ENCODE measurements at regions of chr20 and their contacts with region 1.

Region 1: DNA sequence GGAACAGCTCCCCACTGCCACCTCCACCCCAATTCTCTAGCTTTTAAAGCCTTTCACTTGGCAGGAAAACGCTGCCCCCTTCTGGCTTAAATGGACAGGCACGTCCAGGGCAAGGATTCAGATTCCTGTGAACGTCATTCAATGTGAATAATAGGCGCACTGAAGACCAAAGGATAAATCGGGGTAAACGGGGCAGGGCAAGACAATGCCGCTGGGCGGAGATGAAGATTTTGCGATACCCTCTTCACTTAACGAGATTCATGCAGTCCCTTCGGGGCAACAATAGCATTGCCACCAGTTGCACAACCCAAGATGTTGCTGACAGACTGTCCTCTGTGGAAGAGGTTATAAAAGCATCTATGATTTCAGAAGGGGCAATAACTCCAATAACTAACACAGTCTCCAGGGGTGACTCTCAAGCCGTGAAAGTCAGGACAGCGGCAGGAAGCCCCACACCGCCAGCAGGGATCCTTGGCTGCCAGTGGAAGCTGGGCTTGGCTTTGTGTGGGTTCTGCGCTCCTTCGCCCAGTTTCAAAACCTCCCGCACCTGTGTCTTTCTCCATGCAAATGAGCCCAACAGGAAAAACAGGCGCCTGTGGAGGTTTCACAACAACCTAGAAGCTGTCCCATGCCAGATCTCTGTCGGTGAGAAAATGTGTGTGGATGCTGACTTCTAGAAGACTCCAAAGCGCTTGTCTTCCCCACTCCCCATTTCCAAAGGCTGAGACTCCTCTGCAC is 291.8 kb downstream of the BMP7 start:
- DNase-seq: no peak
- ATAC-seq: peak; percentile 78
- H3K4me3 ChIP-seq: no peak overlapping the region
- H3K27ac ChIP-seq: no peak overlapping the region
- H3K4me1 ChIP-seq: 0 out of 2 replicates have a peak, but pooled peaks cover 5% of the 10 kb centered on the region
- H3K27me3 ChIP-seq: peaks cover 3% of the 10 kb centered on the region; the same call in 1 of the 2 replicates
- CTCF ChIP-seq: peak; percentile 86

Region 2: GRCh38 chr20:56629670-56630478 is 344.8 kb before region 1 on chr20:
- CTCF ChIA-PET with region 1: interaction called, 7 read pairs
- POLR2A ChIA-PET with region 1: no interaction called
- in situ Hi-C with region 1: no loop called
- intact Hi-C with region 1: loop called (anchors 5 kb)
- DNase-seq: no peak
- ATAC-seq: peak; percentile 77
- H3K4me3 ChIP-seq: peak overlapping the region; percentile 68 to 88
- H3K27ac ChIP-seq: peak overlapping the region; percentile 71
- H3K4me1 ChIP-seq: 0 out of 2 replicates have a peak, but pooled peaks cover 6% of the 10 kb centered on the region
- H3K27me3 ChIP-seq: no peaks in the 10 kb centered on the region
- CTCF ChIP-seq: peak; percentile 88

Region 3: DNA sequence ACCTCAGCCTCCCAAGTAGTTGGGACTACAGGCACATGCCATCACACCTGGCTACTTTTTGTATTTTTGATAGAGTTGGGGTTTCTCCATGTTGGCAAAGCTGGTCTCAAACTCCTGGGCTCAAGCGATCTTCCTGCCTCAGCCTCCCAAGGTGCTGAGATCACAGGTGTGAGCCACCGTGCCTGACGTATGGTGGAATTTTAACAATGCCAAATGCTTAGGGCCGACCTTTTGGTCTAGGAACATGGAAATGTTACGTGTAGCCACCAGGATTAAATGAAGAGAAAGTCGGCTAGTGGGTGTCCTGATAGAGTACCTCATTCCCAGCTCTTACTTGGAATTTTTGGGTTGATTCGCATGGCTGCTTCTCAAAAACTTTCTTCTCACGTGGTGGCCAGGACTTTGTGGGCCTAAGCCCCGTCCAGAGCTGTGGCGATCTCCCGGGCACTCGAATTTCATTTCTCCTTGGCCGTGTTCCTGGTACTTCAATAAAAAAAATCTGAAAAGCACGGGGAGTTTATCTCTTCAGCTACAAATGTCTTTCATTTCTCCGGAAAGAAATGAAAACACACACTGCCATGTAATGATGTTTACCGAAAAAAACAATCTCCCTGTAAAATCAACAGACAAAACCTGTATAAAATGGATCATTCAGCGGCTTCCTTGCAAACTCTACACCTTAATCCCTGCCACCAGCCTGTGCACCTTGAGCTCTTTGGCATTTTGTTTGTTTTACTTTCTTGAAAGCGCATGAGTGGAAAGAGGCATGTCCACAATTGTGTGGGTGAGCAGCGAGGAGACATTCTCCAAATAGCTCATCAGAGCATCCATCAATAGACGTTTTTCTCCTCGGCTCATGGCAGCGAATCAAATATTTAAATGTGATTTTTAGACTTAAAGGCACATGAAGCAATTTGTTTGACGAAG is 172.7 kb before region 1 on chr20:
- CTCF ChIA-PET with region 1: no interaction called
- POLR2A ChIA-PET with region 1: no interaction called
- in situ Hi-C with region 1: no loop called
- intact Hi-C with region 1: no loop called
- DNase-seq: no peak
- ATAC-seq: no peak
- H3K4me3 ChIP-seq: peak overlapping the region in 1 of 2 experiments; percentile 6; a peak in 2 of 4 replicates
- H3K27ac ChIP-seq: peak overlapping the region; percentile 45
- H3K4me1 ChIP-seq: peaks cover 16% of the 10 kb centered on the region
- H3K27me3 ChIP-seq: no peaks in the 10 kb centered on the region
- CTCF ChIP-seq: no peak

Region 4: GRCh38 chr20:56934888-56935287 is 39.8 kb before region 1 on chr20:
- CTCF ChIA-PET with region 1: no interaction called
- POLR2A ChIA-PET with region 1: no interaction called
- in situ Hi-C with region 1: no loop called
- intact Hi-C with region 1: no loop called
- DNase-seq: no peak
- ATAC-seq: no peak
- H3K4me3 ChIP-seq: no peak overlapping the region
- H3K27ac ChIP-seq: no peak overlapping the region
- H3K4me1 ChIP-seq: no peaks in the 10 kb centered on the region
- H3K27me3 ChIP-seq: no peaks in the 10 kb centered on the region
- CTCF ChIP-seq: no peak

Measured in Panc1 (cell line).